ENCODE measurements at regions of chr7 and their contacts with region 1.

Region 1: DNA sequence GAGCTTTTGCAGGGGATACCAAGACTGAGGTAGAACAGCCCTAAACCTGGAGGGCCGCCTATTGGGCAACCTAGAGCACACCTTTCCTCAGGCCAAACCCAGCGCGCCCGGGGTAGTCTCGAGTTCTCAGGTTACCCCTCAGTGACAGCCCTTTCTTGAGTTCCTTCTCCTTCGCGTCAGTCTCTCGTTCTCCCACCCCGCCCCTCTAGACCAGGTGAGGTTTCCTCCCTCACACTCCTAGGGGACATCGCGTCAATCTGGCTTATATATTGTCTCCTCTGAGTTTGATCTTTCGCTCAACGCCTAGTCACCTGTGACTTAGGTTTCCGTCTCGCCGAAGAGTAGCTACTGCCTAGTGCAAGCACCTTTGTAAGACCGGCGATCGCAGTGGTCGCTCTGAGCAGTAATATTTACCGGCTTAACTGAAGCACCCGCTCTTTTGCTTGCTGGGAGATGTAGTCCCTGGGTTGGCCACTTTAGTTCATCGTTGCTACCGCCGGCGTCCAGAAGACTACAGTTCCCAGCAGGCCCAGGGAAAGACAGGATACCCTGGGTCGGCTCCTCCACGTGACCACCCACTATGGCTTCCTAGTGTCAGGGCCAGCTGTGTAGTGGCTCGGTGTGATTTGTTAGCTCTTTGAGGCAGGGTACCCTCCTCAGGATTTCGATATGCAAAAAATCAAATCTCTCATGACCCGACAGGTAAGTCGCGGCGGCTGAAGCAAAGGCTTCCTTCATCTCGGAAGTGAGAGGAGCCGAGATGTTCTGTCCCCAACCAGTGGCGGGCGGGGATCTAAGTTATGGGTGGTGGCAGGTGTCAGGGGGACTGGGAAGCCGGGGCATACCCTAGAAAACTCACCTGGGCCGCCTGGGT is at the start of gene VPS50:
- H3K4me3 Mint-ChIP-seq: peak within 1 kb of the TSS; percentile 93
- H3K27ac Mint-ChIP-seq: peak within 1 kb of the TSS; percentile 87
- H3K4me1 Mint-ChIP-seq: peaks cover 8% of the 10 kb centered on the region
- H3K27me3 Mint-ChIP-seq: peaks cover 7% of the 10 kb centered on the region

Region 2: GRCh38 chr7:92944633-92945032 is 287.4 kb before region 1 on chr7:
- intact Hi-C with region 1: no loop called
- H3K4me3 Mint-ChIP-seq: no peak overlapping the region
- H3K27ac Mint-ChIP-seq: no peak overlapping the region
- H3K4me1 Mint-ChIP-seq: no peaks in the 10 kb centered on the region
- H3K27me3 Mint-ChIP-seq: no peaks in the 10 kb centered on the region

Region 3: GRCh38 chr7:93092757-93093370 is 139.2 kb before region 1 on chr7:
- intact Hi-C with region 1: loop called (anchors 1 kb)
- H3K4me3 Mint-ChIP-seq: no peak overlapping the region
- H3K27ac Mint-ChIP-seq: no peak overlapping the region
- H3K4me1 Mint-ChIP-seq: no peaks in the 10 kb centered on the region
- H3K27me3 Mint-ChIP-seq: no peaks in the 10 kb centered on the region

Region 4: DNA sequence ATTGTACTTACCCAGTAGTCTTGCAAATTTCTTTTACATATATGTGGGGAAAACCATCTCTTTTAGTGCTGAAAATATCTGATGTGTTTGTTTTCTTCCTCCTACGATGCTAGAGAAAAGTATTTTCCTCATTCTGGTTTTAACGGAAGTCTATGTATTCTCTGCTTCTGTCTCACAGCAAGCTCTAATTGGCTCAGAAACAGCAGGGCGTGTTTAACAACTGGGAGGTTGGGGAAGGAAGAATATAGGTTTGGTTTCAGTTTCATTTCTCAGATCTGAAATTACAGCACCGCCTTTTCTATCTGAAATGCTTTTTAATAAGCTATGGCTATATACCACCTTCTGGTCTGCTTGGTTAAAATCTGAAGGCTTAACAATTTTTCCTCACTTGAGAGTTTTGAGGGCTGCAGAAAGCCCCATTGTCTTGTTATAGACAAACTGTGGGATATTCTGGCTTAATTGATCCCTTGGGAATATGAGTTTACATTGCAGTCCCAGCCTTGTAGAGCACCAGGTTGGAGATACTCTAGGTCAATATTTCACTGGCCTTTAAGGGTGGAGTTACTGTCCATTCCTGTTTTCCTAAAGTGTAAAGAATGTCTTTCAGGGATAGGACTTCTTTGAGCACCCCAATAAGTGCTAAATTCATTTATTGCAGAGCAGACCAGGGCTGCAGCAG is 114.0 kb before region 1 on chr7 and contains the start of gene SAMD9:
- intact Hi-C with region 1: loop called (anchors 5 kb)
- H3K4me3 Mint-ChIP-seq: peak within 1 kb of the TSS; percentile 81
- H3K27ac Mint-ChIP-seq: peak within 1 kb of the TSS; percentile 73
- H3K4me1 Mint-ChIP-seq: peaks cover 54% of the 10 kb centered on the region
- H3K27me3 Mint-ChIP-seq: no peaks in the 10 kb centered on the region

Region 5: DNA sequence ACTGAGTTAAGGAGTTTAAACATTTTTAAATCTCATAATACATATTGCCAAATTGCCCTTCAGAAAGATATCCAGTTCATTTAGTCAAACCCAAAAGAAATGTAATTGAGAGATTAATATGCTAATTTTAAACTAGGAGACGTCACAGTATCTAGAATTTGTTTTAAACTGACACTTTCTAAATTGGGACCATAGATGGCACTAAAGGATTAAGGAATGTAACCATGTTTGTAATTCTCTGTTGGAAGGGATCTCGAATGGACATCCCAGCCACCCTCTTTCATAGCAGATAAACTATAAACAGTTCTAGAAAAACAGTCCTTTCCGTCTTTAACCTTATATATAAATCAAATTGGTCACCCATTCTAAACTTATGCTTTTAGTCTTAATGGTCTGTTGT is 53.8 kb before region 1 on chr7:
- intact Hi-C with region 1: loop called (anchors 2 kb)
- H3K4me3 Mint-ChIP-seq: no peak overlapping the region
- H3K27ac Mint-ChIP-seq: no peak overlapping the region
- H3K4me1 Mint-ChIP-seq: peaks cover 14% of the 10 kb centered on the region
- H3K27me3 Mint-ChIP-seq: peaks cover 10% of the 10 kb centered on the region